Activated T-helper 2 cell treated with anti-CD3 and anti-CD28 coated beads, Interferon-gamma antibody, Interleukin-2, Interleukin-4, amounts not matched to agents 10 μg/mL and 5 μg/mL and 100 μg/mL, durations not matched to agents 14 hours and 24 hours and 36 hours (primary cell): ENCODE measurements at regions of chr4 and their contacts with region 1.

Region 1: DNA sequence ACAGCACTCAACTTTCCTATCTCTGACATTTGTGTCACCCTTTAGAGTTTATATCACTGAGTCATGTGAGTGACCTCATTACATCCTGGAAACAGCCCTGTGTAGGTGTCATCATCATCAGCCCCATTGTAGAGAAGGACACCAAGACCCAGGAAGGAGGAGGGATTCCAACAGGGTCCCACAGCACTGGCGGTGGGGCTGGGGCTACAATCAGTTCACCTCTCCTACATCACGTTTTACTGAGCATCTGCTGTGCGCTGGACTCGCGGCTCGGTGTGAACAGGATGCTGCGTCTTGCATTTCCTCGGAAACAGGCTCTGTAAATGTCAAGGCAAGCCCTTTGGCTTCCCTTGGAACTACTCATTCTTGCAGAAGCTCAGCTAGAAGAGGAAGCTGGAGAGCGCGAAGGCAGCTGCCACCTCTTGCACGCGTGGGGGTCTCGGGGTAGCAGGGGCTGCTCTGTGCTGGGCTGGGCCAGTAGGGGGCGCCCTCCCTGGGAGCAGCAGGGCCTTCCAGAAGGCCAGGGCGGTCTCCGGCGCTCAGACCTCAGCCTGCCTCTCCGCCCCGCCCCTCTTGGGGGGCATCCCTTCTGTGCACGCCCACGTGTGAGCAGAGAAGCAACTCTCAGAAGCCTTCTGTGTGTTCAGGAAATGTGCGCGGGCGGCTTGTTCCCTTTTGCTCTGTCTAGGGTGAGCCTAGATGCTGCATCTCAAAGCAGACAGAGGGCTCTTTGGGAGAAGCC is 29.0 kb downstream of the REELD1 start:
- DNase-seq: peak; percentile 15
- H3K4me3 Mint-ChIP-seq: peak overlapping the region; percentile 71
- H3K27ac Mint-ChIP-seq: peak overlapping the region; percentile 96
- H3K4me1 Mint-ChIP-seq: peaks cover 54% of the 10 kb centered on the region
- H3K27me3 Mint-ChIP-seq: peaks cover 2% of the 10 kb centered on the region

Region 2: GRCh38 chr4:145090380-145090779 is 1152.9 kb before region 1 on chr4:
- intact Hi-C with region 1: no loop called
- DNase-seq: no peak
- H3K4me3 Mint-ChIP-seq: no peak overlapping the region
- H3K27ac Mint-ChIP-seq: no peak overlapping the region
- H3K4me1 Mint-ChIP-seq: peaks cover 37% of the 10 kb centered on the region
- H3K27me3 Mint-ChIP-seq: no peaks in the 10 kb centered on the region

Region 3: DNA sequence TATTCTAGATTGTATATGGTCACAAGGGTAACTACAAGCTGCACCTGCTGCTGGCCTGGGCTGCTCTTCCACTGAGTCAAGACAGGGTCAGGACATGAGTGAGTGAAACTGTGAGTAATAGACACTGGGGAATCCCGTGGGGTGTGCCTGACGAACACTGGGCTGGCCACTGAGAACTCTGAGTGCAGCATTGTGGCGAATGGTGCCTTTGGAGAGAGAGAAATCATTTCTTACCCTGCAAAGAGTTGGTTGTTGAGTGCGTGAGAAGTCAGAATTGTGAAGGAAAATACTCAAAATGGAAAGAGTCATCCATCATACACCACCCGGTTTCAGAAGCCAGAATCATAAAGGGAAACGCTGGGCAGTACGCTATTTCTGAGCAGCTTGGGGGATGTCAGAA is 110.9 kb before region 1 on chr4:
- intact Hi-C with region 1: loop called (anchors 1 kb)
- DNase-seq: peak; percentile 15
- H3K4me3 Mint-ChIP-seq: no peak overlapping the region
- H3K27ac Mint-ChIP-seq: peak overlapping the region; percentile 69
- H3K4me1 Mint-ChIP-seq: peaks cover 18% of the 10 kb centered on the region
- H3K27me3 Mint-ChIP-seq: peaks cover 2% of the 10 kb centered on the region

Region 4: DNA sequence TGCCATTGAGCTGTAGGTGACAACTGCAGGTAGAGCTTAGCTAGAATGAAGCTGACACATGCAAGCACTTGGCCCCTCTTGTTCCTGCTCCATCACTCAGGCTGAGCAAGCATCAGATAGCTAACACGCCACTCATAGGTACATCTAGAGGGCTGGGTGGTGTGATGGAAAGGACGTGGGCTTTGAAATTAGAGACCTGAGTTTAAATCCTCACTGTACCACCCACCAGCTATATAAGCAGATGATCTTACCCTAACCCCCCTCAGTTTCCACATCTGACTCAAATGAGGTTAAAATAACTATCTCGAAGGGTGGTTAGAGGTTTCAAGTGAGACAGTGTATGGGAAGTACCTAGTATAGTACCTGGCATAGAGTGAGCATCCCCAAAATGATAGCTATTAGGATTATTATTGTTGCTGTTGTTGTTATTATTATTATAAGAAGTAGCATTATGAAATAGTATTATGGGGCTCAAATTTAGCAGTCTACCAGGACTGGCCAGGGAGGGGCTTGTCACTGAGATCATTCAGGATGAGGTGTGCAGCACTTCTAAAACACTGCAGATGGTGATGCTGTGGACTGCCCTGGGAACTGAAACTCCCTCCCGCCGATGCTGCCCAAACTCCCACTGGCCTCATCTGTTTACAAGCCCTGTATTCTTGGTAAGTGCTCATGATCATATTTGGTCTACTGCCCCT is 30.0 kb after region 1 on chr4:
- intact Hi-C with region 1: loop called (anchors 1 kb)
- DNase-seq: no peak
- H3K4me3 Mint-ChIP-seq: no peak overlapping the region
- H3K27ac Mint-ChIP-seq: peak overlapping the region; percentile 5
- H3K4me1 Mint-ChIP-seq: peaks cover 7% of the 10 kb centered on the region
- H3K27me3 Mint-ChIP-seq: no peaks in the 10 kb centered on the region

Region 5: DNA sequence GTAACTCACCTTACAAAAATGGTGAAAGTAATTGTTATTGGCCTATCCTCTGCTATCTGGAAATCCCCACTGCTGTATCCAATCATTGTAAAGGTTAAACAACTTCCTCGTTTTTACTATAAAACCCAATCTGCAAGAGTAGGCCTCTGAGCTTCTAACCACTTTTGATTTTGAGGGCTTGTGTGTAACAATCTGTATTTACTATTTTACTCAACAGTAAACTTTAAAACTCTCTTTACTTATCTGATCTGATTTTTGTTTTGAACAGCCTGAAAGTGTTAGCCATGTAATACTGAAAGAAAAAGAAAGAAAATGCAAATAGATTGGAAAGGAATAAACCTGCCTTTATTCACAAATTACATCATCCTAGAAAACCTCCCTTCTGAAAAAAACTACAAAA is 215.3 kb after region 1 on chr4:
- intact Hi-C with region 1: loop called (anchors 1 kb)
- DNase-seq: no peak
- H3K4me3 Mint-ChIP-seq: peak overlapping the region; percentile 65
- H3K27ac Mint-ChIP-seq: peak overlapping the region; percentile 86
- H3K4me1 Mint-ChIP-seq: peaks cover 29% of the 10 kb centered on the region
- H3K27me3 Mint-ChIP-seq: no peaks in the 10 kb centered on the region

Region 6: GRCh38 chr4:146916479-146917076 is 673.3 kb after region 1 on chr4:
- intact Hi-C with region 1: loop called (anchors 1 kb)
- DNase-seq: no peak
- H3K4me3 Mint-ChIP-seq: no peak overlapping the region
- H3K27ac Mint-ChIP-seq: no peak overlapping the region
- H3K4me1 Mint-ChIP-seq: no peaks in the 10 kb centered on the region
- H3K27me3 Mint-ChIP-seq: peaks cover 9% of the 10 kb centered on the region